GM10248 (cell line): ENCODE measurements at regions of chr7 and their contacts with region 1.

Region 1: DNA sequence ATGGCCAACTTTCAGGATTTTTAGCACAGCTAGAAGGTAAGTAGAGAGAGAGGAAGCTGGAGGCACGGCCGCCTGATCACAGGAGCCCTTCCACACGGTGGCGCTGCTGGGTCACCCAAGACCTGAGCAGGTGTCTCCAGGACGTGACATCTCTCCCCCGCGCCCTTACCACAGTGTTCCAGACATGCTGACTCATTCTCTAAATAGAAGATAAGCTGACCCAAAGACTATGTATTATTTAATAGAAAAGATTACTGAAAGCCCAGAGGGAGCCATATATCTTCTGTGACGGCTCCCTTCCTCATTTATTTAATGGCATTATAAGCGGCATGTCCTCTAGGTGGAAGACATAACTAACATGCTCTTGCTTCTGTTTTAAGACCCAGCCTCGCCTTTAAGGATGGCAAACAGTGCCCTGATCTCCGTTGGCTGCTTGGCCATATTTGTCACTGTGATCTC is 26.0 kb upstream of the MALSU1 start:
- DNase-seq: peak; percentile 85
- CTCF ChIP-seq: peak; percentile 93

Region 2: GRCh38 chr7:23254051-23254681 is 19.0 kb before region 1 on chr7:
- CTCF ChIA-PET with region 1: interaction called, 135 read pairs
- POLR2A ChIA-PET with region 1: no interaction called
- DNase-seq: no peak
- CTCF ChIP-seq: no peak

Region 3: GRCh38 chr7:23287612-23288011 is 14.4 kb after region 1 on chr7:
- CTCF ChIA-PET with region 1: interaction called, 132 read pairs
- POLR2A ChIA-PET with region 1: interaction called, 3 read pairs
- DNase-seq: no peak
- CTCF ChIP-seq: no peak

Region 4: DNA sequence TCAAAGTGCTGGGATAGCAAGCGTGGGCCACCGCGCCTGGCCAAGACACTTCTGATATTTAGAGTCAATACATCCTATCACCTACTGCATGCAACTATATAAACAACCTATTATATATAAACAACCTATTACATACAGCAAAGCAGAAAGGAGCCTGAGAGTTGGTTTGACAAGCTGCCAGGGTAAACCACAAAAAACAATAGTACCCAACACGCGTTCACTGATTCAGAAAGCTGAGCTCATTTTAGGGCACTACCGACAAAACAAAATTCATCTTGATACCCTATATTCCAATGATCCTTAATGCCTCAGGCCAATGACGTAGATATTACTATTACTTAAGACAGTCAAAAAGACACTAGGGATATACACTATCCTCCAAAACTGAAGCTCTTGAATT is 42.2 kb after region 1 on chr7:
- CTCF ChIA-PET with region 1: interaction called, 13 read pairs
- POLR2A ChIA-PET with region 1: no interaction called
- DNase-seq: no peak
- CTCF ChIP-seq: no peak

Region 5: GRCh38 chr7:23474094-23474828 is 201.1 kb after region 1 on chr7:
- CTCF ChIA-PET with region 1: interaction called, 11 read pairs
- POLR2A ChIA-PET with region 1: interaction called, 5 read pairs
- DNase-seq: peak; percentile 96
- CTCF ChIP-seq: no peak

Region 6: DNA sequence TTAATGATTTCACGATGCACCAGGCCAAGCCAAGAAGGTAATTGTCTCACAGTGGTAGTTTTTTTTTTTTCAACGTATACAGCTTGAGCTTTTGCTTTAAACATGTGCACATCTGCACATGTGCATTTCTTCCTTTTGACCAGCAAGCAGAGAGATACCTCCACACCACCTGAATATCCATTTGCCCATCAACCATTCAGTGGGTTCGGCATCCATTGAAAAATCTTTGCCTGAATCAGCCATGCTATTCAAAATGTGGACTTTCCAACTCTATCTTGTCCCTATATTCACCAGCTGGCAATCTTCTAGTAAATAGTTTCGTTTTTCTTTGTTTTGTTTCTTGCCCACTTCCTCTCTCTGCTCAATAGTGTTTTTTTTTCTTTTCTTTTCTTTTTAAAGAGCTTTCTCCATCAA is 266.3 kb after region 1 on chr7:
- CTCF ChIA-PET with region 1: interaction called, 93 read pairs
- POLR2A ChIA-PET with region 1: no interaction called
- DNase-seq: peak; percentile 26
- CTCF ChIP-seq: no peak